A673 (cell line): ENCODE measurements at regions of chr16 and their contacts with region 1.

Region 1: GRCh38 chr16:25553711-25554436 is 137.9 kb upstream of the HS3ST4 start:
- DNase-seq: peak; percentile 12
- H3K4me3 ChIP-seq: no peak overlapping the region
- H3K27ac ChIP-seq: peak overlapping the region; percentile 27
- H3K4me1 ChIP-seq: no peaks in the 10 kb centered on the region
- H3K27me3 ChIP-seq: no peaks in the 10 kb centered on the region
- CTCF ChIP-seq: no peak

Region 2: DNA sequence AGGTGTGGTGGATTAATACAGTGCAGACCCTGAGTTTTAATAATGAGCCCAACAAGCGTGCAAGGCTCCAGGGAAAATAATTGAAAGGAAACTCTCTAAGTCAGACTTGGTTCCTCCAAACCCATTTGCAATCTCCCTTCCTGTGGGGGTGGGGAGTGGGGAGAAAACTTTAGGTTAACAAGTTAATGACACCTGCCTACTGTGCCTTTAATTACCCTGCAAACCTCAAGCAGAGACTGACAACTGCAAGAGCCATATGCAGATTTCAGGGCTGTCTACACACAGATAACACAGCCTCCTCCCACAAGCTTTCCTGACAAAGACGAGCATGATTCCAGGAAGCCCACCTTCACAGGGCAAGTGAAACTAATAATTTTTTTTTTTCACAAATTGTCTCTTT is 497.2 kb after region 1 on chr16:
- CTCF ChIA-PET with region 1: no interaction called
- POLR2A ChIA-PET with region 1: no interaction called
- intact Hi-C with region 1: loop called (anchors 5 kb)
- DNase-seq: peak; percentile 17
- H3K4me3 ChIP-seq: no peak overlapping the region
- H3K27ac ChIP-seq: no peak overlapping the region
- H3K4me1 ChIP-seq: peaks cover 14% of the 10 kb centered on the region
- H3K27me3 ChIP-seq: no peaks in the 10 kb centered on the region
- CTCF ChIP-seq: no peak